K562 (cell line): ENCODE measurements at regions of chr22 and their contacts with region 1.

Region 1: DNA sequence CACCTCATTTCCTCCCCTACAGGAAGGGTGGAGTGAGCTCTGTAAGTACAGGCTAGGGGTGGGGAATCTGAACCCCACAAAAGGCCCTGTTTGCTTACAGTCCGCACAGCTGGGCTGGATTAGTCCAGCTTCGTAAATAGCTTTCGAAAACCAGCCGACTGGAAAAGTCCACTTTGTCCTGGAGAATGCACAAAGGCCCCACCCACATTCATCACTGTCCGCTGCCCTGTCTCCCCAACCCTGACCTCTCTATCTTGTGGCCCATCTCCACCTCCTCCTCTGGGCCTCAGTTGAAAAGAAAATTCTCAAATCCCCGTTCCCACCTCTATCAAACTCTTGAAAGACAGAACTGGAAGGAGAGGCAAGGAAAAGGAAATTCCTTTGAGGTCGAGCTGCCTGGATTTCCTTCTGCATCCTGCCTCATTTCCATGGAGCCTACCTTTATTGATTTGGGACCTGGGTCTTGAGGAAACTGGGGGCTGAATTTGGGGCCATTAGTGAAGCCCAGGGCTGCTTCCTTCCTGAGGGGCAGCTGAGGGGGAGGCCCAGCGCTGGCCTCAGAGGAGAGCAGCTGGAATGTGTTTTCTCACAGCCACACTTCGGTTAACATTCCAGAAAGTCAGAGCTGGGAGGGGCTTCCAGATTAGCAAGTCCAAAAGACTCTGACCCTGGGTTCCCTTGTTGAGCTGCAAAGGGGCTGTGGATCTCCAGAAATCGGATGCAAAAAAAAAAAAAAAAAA is 147.6 kb downstream of the FBXO7 start:
- DNase-seq: no peak
- ATAC-seq: no peak
- H3K4me3 ChIP-seq: no peak overlapping the region
- H3K27ac ChIP-seq: peak overlapping the region; percentile 30; the same call in 1 of the 3 replicates
- H3K4me1 ChIP-seq: peaks cover 0 to 15% of the 10 kb centered on the region in 2 experiments; a peak in 3 of 5 replicates
- H3K27me3 ChIP-seq: no peaks in the 10 kb centered on the region; a peak in 1 of 5 replicates
- CTCF ChIP-seq: no peak
- EP300 ChIP-seq: no peak
- POLR2A ChIP-seq: no peak
- RAD21 ChIP-seq: no peak

Region 2: DNA sequence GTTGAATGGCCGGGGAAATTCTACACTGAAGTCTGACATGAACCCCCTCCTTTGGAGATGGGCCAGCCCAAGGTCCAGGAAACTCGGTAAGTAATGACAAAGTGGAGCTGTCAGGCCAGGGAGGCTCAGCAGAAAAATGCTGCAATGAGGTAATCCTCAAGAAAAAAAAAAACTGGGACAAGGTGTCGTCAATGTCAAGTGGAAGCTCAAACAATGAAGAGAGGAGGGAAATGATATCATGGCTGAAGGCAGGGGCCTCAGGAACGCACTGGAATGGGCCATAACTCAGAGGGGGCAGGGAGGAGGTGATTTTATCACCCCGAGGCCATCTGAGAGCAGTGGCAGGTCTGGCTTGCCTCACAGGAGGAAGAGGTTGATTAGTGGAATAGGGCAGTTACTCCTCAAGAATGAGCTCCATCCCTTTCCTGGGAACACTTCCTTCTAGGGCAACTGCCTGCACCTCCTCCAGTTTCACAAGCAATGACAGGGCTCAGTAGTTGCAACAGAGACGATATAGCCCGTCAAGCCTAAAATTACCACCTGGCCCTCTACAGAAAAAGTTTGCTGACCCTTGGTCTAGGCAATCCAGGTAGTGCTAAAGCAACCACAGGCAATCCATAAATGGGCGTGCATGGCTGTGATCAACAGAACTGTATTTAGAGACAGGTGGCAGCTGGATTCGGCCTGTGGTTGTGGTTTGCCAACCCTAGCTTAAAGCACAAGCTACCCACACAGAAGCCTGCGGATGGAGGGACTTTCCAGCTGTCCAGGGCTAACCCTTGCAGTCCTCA is 82.3 kb before region 1 on chr22:
- CTCF ChIA-PET with region 1: no interaction called
- POLR2A ChIA-PET with region 1: interaction called, 3 read pairs
- in situ Hi-C with region 1: no loop called
- intact Hi-C with region 1: loop called (anchors 10 kb)
- DNase-seq: peak in 2 of 4 experiments; percentile 54 to 56
- ATAC-seq: peak; percentile 82
- H3K4me3 ChIP-seq: no peak overlapping the region
- H3K27ac ChIP-seq: peak overlapping the region; percentile 35; the same call in 2 of the 3 replicates
- H3K4me1 ChIP-seq: peaks cover 10 to 24% of the 10 kb centered on the region in 2 experiments
- H3K27me3 ChIP-seq: no peaks in the 10 kb centered on the region; a peak in 1 of 5 replicates
- CTCF ChIP-seq: no peak
- EP300 ChIP-seq: peak; percentile 33
- POLR2A ChIP-seq: no peak
- RAD21 ChIP-seq: no peak